Right cardiac atrium (tissue), 5 donors: ENCODE measurements at regions of chr20 and their contacts with region 1.

Region 1: DNA sequence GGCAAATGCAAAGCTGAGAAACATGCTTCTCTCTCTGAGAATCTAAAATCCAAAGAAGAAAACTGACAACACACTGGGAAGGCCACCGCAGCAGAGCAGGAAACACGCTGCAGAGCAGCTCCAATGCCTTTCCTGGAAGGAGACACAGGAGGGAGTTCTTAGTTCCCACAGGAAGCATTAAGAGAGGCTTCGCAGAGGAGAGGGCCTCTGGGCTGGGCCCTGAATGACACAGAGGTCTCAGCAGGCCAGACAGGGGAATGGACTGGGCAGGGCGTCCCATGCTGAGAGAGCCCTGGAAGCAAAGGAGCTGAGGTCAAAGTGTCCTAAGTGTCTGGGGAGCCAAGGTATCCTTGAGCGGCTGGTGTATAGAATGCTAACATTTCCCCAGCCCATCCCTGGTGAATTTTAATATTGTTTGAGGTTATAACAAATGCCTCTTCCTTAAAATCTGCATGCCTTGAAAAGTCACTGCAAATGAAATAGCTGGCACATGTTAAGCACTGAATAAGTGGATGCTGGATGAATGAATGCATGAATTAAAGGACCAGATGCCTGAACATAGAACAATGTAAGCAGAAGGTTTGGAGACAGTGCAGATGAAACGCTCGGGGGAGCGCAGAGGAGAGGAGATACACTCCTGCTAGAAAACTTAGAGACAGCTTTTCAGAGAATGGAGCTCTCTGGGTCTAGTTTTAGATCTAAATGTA is 110.0 kb upstream of the SYNDIG1 start:
- DNase-seq: no peak
- ATAC-seq: peak in 1 of 2 donors; percentile 57
- H3K4me3 ChIP-seq: no peak overlapping the region
- H3K27ac ChIP-seq: no peak overlapping the region
- H3K4me1 ChIP-seq: no peaks in the 10 kb centered on the region
- H3K27me3 ChIP-seq: no peaks in the 10 kb centered on the region

Region 2: DNA sequence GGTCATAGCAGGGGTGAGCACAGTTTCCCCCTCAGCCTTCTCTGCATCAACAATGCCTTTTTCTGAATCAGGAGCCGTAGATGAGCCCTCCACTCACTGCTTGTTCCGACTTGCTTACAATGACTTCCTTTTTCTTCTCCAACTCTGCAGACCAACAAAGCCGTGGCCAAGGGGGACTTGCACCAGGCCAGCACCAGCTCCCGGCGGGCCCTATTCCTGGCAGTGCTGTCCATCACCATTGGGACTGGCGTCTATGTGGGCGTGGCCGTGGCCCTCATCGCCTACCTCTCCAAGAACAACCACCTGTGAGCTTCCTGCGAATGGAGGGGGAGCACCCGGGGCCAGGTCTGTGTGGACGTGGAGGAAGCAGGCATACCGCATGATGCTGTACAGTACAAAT is 305.7 kb after region 1 on chr20:
- intact Hi-C with region 1: loop called in 1 of 4 experiments (anchors 5 kb)
- DNase-seq: peak in 1 of 3 donors; percentile 25
- ATAC-seq: no peak
- H3K4me3 ChIP-seq: no peak overlapping the region
- H3K27ac ChIP-seq: no peak overlapping the region
- H3K4me1 ChIP-seq: no peaks in the 10 kb centered on the region
- H3K27me3 ChIP-seq: no peaks in the 10 kb centered on the region